Calu3 (cell line): ENCODE measurements at regions of chr5 and their contacts with region 1.

Region 1: GRCh38 chr5:154368041-154368800 is 77.6 kb upstream of the SAP30L start:
- DNase-seq: peak; percentile 63
- H3K4me3 Mint-ChIP-seq: no peak overlapping the region
- H3K27ac Mint-ChIP-seq: peak overlapping the region; percentile 13
- H3K4me1 Mint-ChIP-seq: peaks cover 58% of the 10 kb centered on the region
- H3K27me3 Mint-ChIP-seq: no peaks in the 10 kb centered on the region
- CTCF ChIP-seq: no peak

Region 2: DNA sequence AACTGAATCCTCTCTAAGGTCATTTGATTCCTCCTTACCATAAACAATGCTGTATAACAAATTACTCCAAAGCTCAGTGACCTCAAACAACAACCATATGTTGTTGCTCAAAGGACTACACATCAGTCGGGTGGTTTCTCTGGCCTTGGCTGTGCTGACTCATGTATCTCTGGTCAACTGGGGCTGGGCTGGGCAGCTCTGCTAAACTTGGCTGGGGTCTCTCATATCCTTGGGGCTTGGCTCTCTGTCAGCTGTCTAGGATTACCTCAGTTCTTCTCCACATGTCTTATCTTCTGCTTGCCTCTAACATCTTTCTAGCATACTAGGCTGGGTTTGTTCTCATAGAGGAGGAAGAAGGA is 91.3 kb before region 1 on chr5:
- CTCF ChIA-PET with region 1: no interaction called
- intact Hi-C with region 1: no loop called
- DNase-seq: no peak
- H3K4me3 Mint-ChIP-seq: no peak overlapping the region
- H3K27ac Mint-ChIP-seq: no peak overlapping the region
- H3K4me1 Mint-ChIP-seq: peaks cover 18% of the 10 kb centered on the region
- H3K27me3 Mint-ChIP-seq: no peaks in the 10 kb centered on the region
- CTCF ChIP-seq: no peak

Region 3: DNA sequence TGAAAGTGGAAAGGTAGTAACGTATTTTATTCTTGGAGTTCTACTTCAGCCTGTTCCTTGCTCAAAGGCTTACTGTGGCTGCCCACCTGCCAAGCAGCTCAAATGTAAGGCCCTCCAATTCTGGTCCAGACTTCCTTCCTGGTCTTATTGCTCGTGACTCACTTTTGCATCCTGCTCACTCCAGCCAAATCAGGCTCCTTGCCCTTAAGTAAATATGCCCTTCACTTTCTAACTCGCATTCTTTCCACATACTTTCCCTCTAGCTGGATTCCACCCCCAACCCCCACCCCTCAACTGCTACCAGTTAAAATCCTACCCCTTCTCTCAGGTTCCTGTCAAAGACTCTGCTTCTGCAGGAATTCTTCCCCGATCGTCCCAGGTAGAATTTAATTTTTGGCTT is 81.1 kb before region 1 on chr5:
- CTCF ChIA-PET with region 1: no interaction called
- intact Hi-C with region 1: loop called (anchors 5 kb)
- DNase-seq: peak; percentile 71
- H3K4me3 Mint-ChIP-seq: peak overlapping the region; percentile 55
- H3K27ac Mint-ChIP-seq: peak overlapping the region; percentile 54
- H3K4me1 Mint-ChIP-seq: peaks cover 53% of the 10 kb centered on the region
- H3K27me3 Mint-ChIP-seq: no peaks in the 10 kb centered on the region
- CTCF ChIP-seq: no peak

Region 4: GRCh38 chr5:154386952-154387629 is 18.9 kb after region 1 on chr5:
- CTCF ChIA-PET with region 1: interaction called, 19 read pairs
- intact Hi-C with region 1: no loop called
- DNase-seq: no peak
- H3K4me3 Mint-ChIP-seq: no peak overlapping the region
- H3K27ac Mint-ChIP-seq: no peak overlapping the region
- H3K4me1 Mint-ChIP-seq: peaks cover 67% of the 10 kb centered on the region
- H3K27me3 Mint-ChIP-seq: no peaks in the 10 kb centered on the region
- CTCF ChIP-seq: no peak

Region 5: DNA sequence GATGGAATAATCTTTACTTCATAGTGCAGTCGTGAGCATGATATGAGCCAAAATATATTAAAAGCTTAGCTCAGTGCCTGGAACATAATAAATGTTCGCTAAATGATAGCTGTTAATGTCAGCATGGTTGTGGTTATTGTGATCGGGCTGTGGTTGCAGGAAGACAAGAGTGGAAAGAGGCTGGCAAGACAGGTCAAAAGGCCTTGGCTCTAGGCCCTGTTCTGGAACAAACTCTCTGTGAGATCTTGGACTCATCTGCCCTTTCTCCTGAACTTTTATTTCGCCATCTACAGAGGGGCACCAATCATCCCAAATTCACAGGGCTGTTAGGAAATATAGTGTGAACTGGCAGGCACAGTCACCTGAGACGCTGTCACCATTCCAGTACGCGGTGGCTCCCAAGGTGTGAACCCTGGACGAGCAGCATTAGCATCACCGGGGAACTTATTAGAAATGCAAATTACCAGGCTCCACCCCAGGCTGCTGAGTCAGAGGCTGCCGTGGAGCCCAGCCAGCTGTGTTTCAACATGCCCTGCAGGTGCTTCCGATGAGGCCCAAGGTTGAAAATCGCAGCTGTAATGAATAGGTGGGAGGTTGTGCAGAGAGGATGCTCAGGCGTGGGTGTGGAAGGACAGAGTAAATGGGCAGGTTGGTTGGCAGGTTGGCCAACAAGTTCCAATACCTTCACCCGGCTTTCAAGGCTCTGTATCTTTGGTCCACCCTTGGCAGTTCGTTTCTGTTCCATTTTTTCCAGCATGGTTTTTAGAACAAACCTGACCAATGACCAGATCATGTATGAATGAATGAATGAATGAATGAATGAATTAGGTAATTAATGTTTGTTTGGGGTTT is 27.4 kb after region 1 on chr5:
- CTCF ChIA-PET with region 1: interaction called, 4 read pairs
- intact Hi-C with region 1: loop called (anchors 2 kb)
- DNase-seq: peak; percentile 80
- H3K4me3 Mint-ChIP-seq: no peak overlapping the region
- H3K27ac Mint-ChIP-seq: peak overlapping the region; percentile 34
- H3K4me1 Mint-ChIP-seq: peaks cover 66% of the 10 kb centered on the region
- H3K27me3 Mint-ChIP-seq: no peaks in the 10 kb centered on the region
- CTCF ChIP-seq: no peak